ENCODE measurements at regions of chr9 and their contacts with region 1.

Region 1: GRCh38 chr9:98056269-98057137 is at the start of gene NANS:
- DNase-seq: peak; percentile 87 to 97 (median 94)

Region 2: GRCh38 chr9:97880336-97880735 is 176.2 kb before region 1 on chr9:
- intact Hi-C with region 1: no loop called
- DNase-seq: no peak

Region 3: GRCh38 chr9:97982683-97983588 is 73.6 kb before region 1 on chr9 and contains the start of gene ANP32B:
- intact Hi-C with region 1: loop called (anchors 5 kb)
- DNase-seq: peak; percentile 79 to 97 (median 93)

Region 4: GRCh38 chr9:98168941-98169488 is 112.5 kb after region 1 on chr9:
- intact Hi-C with region 1: no loop called
- DNase-seq: peak in 5 of 42 donors; percentile 7 to 49 (median 15)

Region 5: DNA sequence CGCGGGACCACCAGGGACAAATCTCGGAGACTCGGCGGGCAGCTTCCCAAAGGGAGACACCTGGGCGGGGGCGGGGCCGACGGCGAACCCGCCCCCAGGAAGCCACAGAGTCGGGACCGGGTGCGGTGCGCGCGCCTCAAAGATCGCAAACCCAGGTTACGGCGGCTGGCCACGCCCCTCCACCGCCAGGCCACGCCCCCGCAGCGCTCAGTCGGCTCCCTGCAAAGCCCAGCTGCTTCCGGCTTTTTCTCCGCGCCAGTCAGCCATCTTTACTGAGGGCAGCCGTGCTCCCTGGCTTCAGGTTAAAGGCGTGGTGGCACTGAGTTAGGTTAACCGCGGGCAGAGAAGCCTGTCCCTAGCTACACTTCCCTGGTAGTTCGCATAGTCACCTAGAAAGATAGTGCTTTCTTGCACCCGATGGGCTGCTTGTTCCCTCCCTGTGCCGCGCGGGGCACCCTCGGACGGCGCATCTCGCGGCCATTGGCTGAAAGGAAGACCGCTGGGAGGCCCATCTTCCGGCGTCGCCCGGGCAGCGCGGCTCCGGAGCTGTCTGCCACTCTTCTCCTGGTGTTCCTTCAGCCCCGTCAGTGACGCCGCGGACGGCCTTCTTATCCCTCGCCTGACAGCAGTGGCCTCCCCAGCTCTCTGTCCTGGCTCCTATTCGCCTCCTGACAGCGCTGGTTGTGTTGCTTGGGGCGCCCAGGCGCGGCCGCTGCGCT is 199.2 kb after region 1 on chr9 and contains the start of gene TBC1D2:
- intact Hi-C with region 1: loop called (anchors 5 kb)
- DNase-seq: peak; percentile 88 to 98 (median 94)

Measured in head of caudate nucleus (tissue), 42 donors.